MCF 10A (cell line): ENCODE measurements at regions of chr2 and their contacts with region 1.

Region 1: DNA sequence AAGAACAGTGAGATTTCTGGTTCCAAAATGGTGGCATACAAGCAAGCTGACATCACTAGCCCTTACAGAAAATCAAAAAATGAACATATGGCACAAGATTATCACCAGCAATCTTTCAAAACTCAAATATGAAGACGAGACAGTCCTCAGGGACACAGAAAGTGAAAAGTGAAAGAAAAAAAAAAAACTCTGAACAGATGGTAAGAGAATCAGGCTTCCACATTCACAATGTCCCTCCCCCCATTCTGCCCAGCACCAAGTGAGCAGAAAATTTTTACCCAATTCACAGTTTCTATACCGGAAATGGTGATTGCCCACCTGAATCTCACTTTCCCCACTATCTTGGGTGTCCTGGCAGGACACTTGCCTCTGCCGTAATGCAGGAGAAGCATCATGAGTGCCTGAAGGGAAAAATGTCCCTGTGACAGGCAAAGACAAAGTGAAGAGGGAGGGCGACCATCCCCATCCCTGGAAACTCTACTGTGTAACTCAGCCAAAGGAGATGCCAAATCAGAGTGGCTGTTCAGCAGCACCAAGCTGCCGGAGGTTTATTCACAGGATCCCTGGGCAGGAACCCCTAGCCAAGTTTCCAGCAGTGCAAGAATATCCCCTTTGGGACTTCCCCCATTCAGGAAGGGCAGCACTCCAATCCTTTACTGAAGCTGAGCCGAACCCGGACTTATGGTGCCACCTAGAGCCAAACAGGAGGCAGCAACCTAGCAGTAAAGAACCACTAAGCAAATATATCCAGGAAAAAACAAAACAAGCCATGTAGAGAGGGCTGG is 312.2 kb downstream of the LRATD1 start:
- DNase-seq: peak; percentile 69
- H3K4me3 Mint-ChIP-seq: no peak overlapping the region
- H3K27ac Mint-ChIP-seq: no peak overlapping the region
- H3K4me1 Mint-ChIP-seq: no peaks in the 10 kb centered on the region
- H3K27me3 Mint-ChIP-seq: no peaks in the 10 kb centered on the region
- CTCF ChIP-seq: peak; percentile 24

Region 2: DNA sequence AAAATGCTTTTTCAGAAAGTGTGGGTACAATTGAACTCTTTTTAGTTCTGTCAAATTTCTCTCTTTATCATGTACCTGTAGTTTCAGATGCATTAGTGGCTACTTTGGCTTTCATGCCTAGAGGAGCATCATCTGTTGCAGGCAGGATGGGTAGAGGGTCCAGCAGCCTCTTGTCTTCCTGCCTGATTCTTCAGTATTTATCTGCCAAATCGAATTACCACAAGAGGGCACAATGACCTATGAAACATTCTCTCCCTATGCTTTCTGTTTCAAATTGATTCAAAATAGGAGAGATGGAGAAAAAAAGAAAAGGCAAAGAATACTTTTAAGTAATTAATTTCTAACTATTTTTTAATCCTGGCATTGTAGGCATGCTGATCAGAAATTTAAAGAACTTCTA is 1750.9 kb before region 1 on chr2:
- CTCF ChIA-PET with region 1: no interaction called
- POLR2A ChIA-PET with region 1: no interaction called
- intact Hi-C with region 1: loop called (anchors 2 kb)
- DNase-seq: peak; percentile 55
- H3K4me3 Mint-ChIP-seq: no peak overlapping the region
- H3K27ac Mint-ChIP-seq: no peak overlapping the region
- H3K4me1 Mint-ChIP-seq: peaks cover 9% of the 10 kb centered on the region
- H3K27me3 Mint-ChIP-seq: no peaks in the 10 kb centered on the region
- CTCF ChIP-seq: peak; percentile 58

Region 3: DNA sequence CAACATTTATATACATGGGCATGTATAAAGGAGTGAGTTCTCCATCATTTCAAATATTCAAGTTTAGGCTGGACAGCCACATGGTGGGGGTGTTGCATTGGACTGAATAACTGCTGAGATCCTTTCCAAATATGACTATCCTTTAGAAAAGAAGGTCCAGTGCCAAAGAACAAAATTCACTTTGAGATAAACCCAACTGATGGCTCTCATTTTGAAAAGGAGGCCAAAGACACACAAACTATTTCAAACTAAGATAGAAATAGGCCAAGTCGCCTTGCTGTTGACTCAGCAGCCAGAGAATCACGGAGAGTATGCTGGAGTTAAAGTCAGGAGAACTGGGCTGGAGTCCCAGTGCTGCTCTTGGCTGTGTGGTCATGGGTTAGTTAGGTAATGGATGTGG is 516.7 kb before region 1 on chr2:
- CTCF ChIA-PET with region 1: no interaction called
- POLR2A ChIA-PET with region 1: no interaction called
- intact Hi-C with region 1: loop called (anchors 2 kb)
- DNase-seq: peak; percentile 46
- H3K4me3 Mint-ChIP-seq: no peak overlapping the region
- H3K27ac Mint-ChIP-seq: no peak overlapping the region
- H3K4me1 Mint-ChIP-seq: no peaks in the 10 kb centered on the region
- H3K27me3 Mint-ChIP-seq: no peaks in the 10 kb centered on the region
- CTCF ChIP-seq: no peak